Naive thymus-derived CD4-positive, alpha-beta T cell (primary cell): ENCODE measurements at regions of chr2 and their contacts with region 1.

Region 1: DNA sequence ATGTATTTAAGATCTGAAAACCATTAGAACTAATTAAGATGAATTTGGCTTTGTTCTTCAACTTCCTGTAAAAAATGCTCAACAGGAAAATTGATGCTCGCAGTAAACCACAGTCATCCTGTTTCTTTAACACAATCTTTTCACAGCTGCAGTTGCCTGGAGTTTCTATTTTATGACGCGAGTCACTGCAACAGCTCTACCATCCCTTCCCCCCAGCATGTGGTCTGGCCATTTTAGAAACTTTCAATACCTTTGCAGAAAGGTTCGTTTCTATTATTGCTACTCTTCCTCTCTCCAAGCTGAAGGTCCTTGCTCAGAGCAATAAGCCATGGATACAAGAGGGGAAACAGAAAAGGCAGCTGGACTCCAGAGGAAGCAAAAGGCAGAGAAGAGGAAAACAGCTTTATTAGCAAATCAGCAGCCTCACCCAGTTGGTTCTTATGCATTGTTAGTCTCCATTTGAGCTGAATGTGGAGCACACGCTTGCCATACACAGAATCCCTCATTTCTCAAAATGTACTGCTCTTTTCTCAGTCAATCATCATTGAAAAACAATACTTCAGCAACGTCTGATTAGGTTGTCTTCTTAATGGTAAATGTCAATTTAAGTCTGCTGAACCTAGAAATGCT is 3.9 kb downstream of the WIPF1 start:
- DNase-seq: peak in 8 of 9 donors; percentile 53 to 92 (median 90)
- ATAC-seq: peak; percentile 87
- H3K4me3 ChIP-seq: peak overlapping the region; percentile 59
- H3K4me3 Mint-ChIP-seq: peak overlapping the region; percentile 87 to 100 (median 92)
- H3K27ac ChIP-seq: peak overlapping the region; percentile 90
- H3K27ac Mint-ChIP-seq: peak overlapping the region; percentile 90 to 99 (median 97)
- H3K4me1 ChIP-seq: peaks cover 42 to 44% of the 10 kb centered on the region in 2 donors
- H3K4me1 Mint-ChIP-seq: peaks cover 47 to 69% (median 59%) of the 10 kb centered on the region in 7 donors
- H3K27me3 ChIP-seq: no peaks in the 10 kb centered on the region
- H3K27me3 Mint-ChIP-seq: no peaks in the 10 kb centered on the region

Region 2: DNA sequence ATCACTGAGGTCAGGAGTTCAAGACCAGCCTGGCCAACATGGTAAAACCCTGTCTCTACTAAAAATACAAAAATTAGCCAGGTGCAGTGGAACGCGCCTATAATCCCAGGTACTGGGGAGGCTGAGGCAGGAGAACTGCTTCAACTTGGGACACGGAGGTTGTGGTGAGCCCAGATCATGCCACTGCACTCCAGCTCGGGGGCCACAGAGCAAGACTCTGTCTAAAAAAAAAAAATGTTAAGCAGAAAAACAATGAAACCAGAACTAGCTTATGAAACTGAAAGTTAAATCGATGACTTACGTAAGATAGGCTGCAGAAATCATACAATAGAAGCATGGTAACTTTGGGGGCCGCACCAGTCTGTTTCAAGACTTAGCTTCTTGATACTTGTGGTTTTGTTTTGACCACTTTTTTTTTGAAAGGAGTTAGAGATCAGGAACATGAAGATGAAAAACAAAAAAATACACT is 100.7 kb before region 1 on chr2:
- CTCF ChIA-PET with region 1: interaction called, 4 read pairs
- POLR2A ChIA-PET with region 1: interaction called, 12 read pairs
- intact Hi-C with region 1: loop called in 1 of 2 experiments (anchors 1 kb)
- DNase-seq: peak; percentile 18 to 89 (median 85)
- ATAC-seq: peak; percentile 95
- H3K4me3 ChIP-seq: peak overlapping the region; percentile 36
- H3K4me3 Mint-ChIP-seq: peak overlapping the region; percentile 74 to 92 (median 87)
- H3K27ac ChIP-seq: peak overlapping the region; percentile 85
- H3K27ac Mint-ChIP-seq: peak overlapping the region; percentile 91 to 100 (median 98)
- H3K4me1 ChIP-seq: peaks cover 49 to 50% of the 10 kb centered on the region in 2 donors
- H3K4me1 Mint-ChIP-seq: peaks cover 40 to 87% (median 77%) of the 10 kb centered on the region in 7 donors
- H3K27me3 ChIP-seq: no peaks in the 10 kb centered on the region
- H3K27me3 Mint-ChIP-seq: no peaks in the 10 kb centered on the region

Region 3: GRCh38 chr2:174577967-174578589 is 15.6 kb before region 1 on chr2:
- CTCF ChIA-PET with region 1: interaction called, 21 read pairs
- POLR2A ChIA-PET with region 1: interaction called, 277 read pairs
- intact Hi-C with region 1: loop called (anchors 1 kb)
- DNase-seq: peak in 7 of 9 donors; percentile 55 to 77 (median 68)
- ATAC-seq: peak; percentile 86
- H3K4me3 ChIP-seq: no peak overlapping the region
- H3K4me3 Mint-ChIP-seq: peak overlapping the region in 1 of 10 donors; percentile 27
- H3K27ac ChIP-seq: peak overlapping the region; percentile 33
- H3K27ac Mint-ChIP-seq: peak overlapping the region in 8 of 9 donors; percentile 46 to 91 (median 81)
- H3K4me1 ChIP-seq: peaks cover 56 to 74% of the 10 kb centered on the region in 2 donors
- H3K4me1 Mint-ChIP-seq: peaks cover 31 to 91% (median 77%) of the 10 kb centered on the region in 7 donors
- H3K27me3 ChIP-seq: no peaks in the 10 kb centered on the region
- H3K27me3 Mint-ChIP-seq: no peaks in the 10 kb centered on the region

Region 4: GRCh38 chr2:174615871-174616436 is 22.3 kb after region 1 on chr2:
- CTCF ChIA-PET with region 1: interaction called, 4 read pairs
- POLR2A ChIA-PET with region 1: interaction called, 102 read pairs
- intact Hi-C with region 1: no loop called
- DNase-seq: peak in 2 of 9 donors; percentile 34 to 40
- ATAC-seq: peak; percentile 76
- H3K4me3 ChIP-seq: no peak overlapping the region
- H3K4me3 Mint-ChIP-seq: peak overlapping the region in 9 of 10 donors; percentile 29 to 76 (median 48)
- H3K27ac ChIP-seq: peak overlapping the region; percentile 46
- H3K27ac Mint-ChIP-seq: peak overlapping the region; percentile 9 to 92 (median 83)
- H3K4me1 ChIP-seq: peaks cover 50 to 57% of the 10 kb centered on the region in 2 donors
- H3K4me1 Mint-ChIP-seq: peaks cover 60 to 100% (median 94%) of the 10 kb centered on the region in 7 donors
- H3K27me3 ChIP-seq: no peaks in the 10 kb centered on the region
- H3K27me3 Mint-ChIP-seq: no peaks in the 10 kb centered on the region

Region 5: DNA sequence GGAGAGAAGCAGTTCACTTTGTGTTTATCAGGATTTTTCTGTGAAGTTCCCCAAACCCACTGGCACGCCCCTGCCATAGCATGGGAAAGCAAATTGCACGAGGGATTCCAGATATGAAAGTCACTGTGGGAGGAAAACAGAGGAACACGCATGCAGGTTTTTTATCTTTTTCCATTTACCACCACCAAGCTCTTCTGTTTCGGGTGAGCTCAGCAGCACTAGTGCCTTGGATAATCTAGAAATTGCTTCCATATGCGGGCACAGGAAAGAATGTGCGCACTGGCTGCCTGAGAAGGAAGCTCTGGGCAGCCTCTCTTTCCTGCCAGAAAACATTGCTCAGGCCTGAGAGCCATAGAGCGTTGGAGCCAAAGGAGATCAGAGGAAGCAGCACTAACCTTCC is 69.9 kb after region 1 on chr2:
- CTCF ChIA-PET with region 1: no interaction called
- POLR2A ChIA-PET with region 1: no interaction called
- intact Hi-C with region 1: no loop called
- DNase-seq: no peak
- ATAC-seq: no peak
- H3K4me3 ChIP-seq: no peak overlapping the region
- H3K4me3 Mint-ChIP-seq: no peak overlapping the region
- H3K27ac ChIP-seq: no peak overlapping the region
- H3K27ac Mint-ChIP-seq: peak overlapping the region in 1 of 9 donors; percentile 43
- H3K4me1 ChIP-seq: peaks cover 6 to 17% of the 10 kb centered on the region in 2 donors
- H3K4me1 Mint-ChIP-seq: peaks cover 32 to 67% (median 41%) of the 10 kb centered on the region in 7 donors
- H3K27me3 ChIP-seq: no peaks in the 10 kb centered on the region
- H3K27me3 Mint-ChIP-seq: no peaks in the 10 kb centered on the region

Region 6: DNA sequence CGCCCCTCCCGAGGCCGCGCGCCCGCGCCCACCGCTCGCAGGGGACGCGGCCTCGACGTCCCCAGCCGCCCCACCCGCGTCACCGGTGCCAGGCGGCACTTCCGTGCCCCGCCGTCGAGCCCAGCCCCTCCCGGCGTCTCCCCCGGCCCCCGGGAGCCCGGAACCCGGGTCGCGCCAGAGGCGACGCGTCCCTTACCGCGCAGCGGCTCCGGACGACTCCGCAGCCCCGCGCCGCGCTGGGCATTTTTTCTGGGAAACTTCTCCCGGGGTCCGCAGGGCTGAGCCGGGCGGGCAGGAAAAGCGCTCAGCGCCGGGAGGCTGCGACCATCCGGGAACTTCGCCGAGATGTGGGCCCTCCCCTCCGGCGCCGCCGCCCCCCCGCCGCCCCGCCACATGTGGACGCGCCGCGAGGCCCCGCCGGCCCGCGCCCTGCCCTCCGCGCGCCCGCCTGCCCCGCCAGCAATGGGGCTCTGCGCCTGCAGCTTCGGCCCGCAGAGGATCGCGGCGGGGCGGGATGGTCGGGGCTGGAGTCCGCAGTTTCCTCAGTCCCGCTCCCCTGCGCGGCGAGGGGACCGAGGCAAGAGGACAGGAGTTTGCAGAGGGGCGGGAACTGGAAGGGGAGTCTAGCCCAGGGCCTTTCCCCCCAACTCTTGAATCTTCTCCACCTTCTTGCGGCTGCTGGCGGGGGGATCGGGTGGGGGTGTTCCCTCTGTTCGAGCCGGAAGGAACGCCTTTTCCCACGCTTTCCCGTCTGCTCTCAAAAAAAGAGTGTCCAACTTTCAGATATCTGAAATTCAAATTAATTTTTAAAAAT is 89.1 kb after region 1 on chr2:
- CTCF ChIA-PET with region 1: interaction called, 223 read pairs
- POLR2A ChIA-PET with region 1: interaction called, 62 read pairs
- intact Hi-C with region 1: loop called (anchors 1 kb)
- DNase-seq: peak; percentile 56 to 73 (median 71)
- ATAC-seq: peak; percentile 78
- H3K4me3 ChIP-seq: peak overlapping the region; percentile 72
- H3K4me3 Mint-ChIP-seq: peak overlapping the region; percentile 92 to 99 (median 96)
- H3K27ac ChIP-seq: peak overlapping the region; percentile 88
- H3K27ac Mint-ChIP-seq: peak overlapping the region; percentile 91 to 98 (median 96)
- H3K4me1 ChIP-seq: peaks cover 11% of the 10 kb centered on the region in 2 donors
- H3K4me1 Mint-ChIP-seq: peaks cover 34 to 69% (median 61%) of the 10 kb centered on the region in 7 donors
- H3K27me3 ChIP-seq: no peaks in the 10 kb centered on the region
- H3K27me3 Mint-ChIP-seq: no peaks in the 10 kb centered on the region

Region 7: GRCh38 chr2:174688079-174688478 is 94.4 kb after region 1 on chr2:
- CTCF ChIA-PET with region 1: interaction called, 223 read pairs
- POLR2A ChIA-PET with region 1: interaction called, 62 read pairs
- intact Hi-C with region 1: loop called in 1 of 2 experiments (anchors 1 kb)
- DNase-seq: peak in 6 of 9 donors; percentile 36 to 63 (median 45)
- ATAC-seq: peak; percentile 73
- H3K4me3 ChIP-seq: no peak overlapping the region
- H3K4me3 Mint-ChIP-seq: peak overlapping the region in 1 of 10 donors; percentile 40
- H3K27ac ChIP-seq: no peak overlapping the region
- H3K27ac Mint-ChIP-seq: peak overlapping the region in 7 of 9 donors; percentile 14 to 82 (median 21)
- H3K4me1 ChIP-seq: peaks cover 0 to 6% of the 10 kb centered on the region in 2 donors
- H3K4me1 Mint-ChIP-seq: peaks cover 19 to 45% (median 30%) of the 10 kb centered on the region in 7 donors
- H3K27me3 ChIP-seq: no peaks in the 10 kb centered on the region
- H3K27me3 Mint-ChIP-seq: peaks cover 0 to 6% (median 0%) of the 10 kb centered on the region in 5 donors

Region 8: GRCh38 chr2:174778085-174778981 is 184.6 kb after region 1 on chr2:
- CTCF ChIA-PET with region 1: no interaction called
- POLR2A ChIA-PET with region 1: no interaction called
- intact Hi-C with region 1: loop called in 1 of 2 experiments (anchors 2 kb)
- DNase-seq: peak; percentile 51 to 93 (median 91)
- ATAC-seq: peak; percentile 93
- H3K4me3 ChIP-seq: peak overlapping the region; percentile 3
- H3K4me3 Mint-ChIP-seq: peak overlapping the region; percentile 53 to 84 (median 72)
- H3K27ac ChIP-seq: peak overlapping the region; percentile 61
- H3K27ac Mint-ChIP-seq: peak overlapping the region; percentile 55 to 97 (median 95)
- H3K4me1 ChIP-seq: peaks cover 28 to 39% of the 10 kb centered on the region in 2 donors
- H3K4me1 Mint-ChIP-seq: peaks cover 34 to 60% (median 46%) of the 10 kb centered on the region in 7 donors
- H3K27me3 ChIP-seq: no peaks in the 10 kb centered on the region
- H3K27me3 Mint-ChIP-seq: no peaks in the 10 kb centered on the region

Region 9: DNA sequence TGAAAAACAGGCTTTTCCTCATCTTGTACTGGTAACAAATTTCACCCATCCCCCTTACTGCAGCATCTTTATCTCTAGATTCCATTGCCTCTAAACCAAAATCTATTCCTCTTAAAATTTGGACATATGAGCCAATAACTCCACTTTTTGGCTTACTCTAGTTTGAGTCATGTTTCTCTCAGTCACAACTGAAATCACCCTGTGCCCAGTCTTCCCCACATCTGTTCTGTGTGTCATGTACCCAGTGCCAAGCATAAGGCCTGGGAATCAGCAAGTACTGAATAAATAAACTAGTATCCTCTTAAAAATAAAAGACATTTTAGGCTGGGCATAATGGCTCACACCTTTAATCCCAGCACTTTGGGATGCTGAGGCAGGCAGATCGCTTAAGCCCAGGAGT is 432.3 kb after region 1 on chr2:
- CTCF ChIA-PET with region 1: no interaction called
- POLR2A ChIA-PET with region 1: no interaction called
- intact Hi-C with region 1: no loop called
- DNase-seq: no peak
- ATAC-seq: no peak
- H3K4me3 ChIP-seq: no peak overlapping the region
- H3K4me3 Mint-ChIP-seq: no peak overlapping the region
- H3K27ac ChIP-seq: no peak overlapping the region
- H3K27ac Mint-ChIP-seq: no peak overlapping the region
- H3K4me1 ChIP-seq: no peaks in the 10 kb centered on the region
- H3K4me1 Mint-ChIP-seq: no peaks in the 10 kb centered on the region
- H3K27me3 ChIP-seq: no peaks in the 10 kb centered on the region
- H3K27me3 Mint-ChIP-seq: peaks cover 0 to 17% (median 0%) of the 10 kb centered on the region in 5 donors